ENCODE measurements at regions of chr5 and their contacts with region 1.

Region 1: GRCh38 chr5:134411546-134412266 is at the start of gene CDKN2AIPNL:
- DNase-seq: peak; percentile 97
- H3K4me3 ChIP-seq: peak within 1 kb of the TSS; percentile 65 to 99
- H3K27ac ChIP-seq: peak within 1 kb of the TSS; percentile 25 to 63; a peak in 3 of 4 replicates
- H3K4me1 ChIP-seq: peaks cover 0 to 14% of the 10 kb centered on the region in 2 experiments; a peak in 2 of 4 replicates
- H3K27me3 ChIP-seq: no peaks in the 10 kb centered on the region
- CTCF ChIP-seq: peak; percentile 70
- EP300 ChIP-seq: peak in 1 of 2 experiments; percentile 65; a peak in 1 of 4 replicates
- RAD21 ChIP-seq: peak; percentile 66
- polyA plus RNA-seq, gene CDKN2AIPNL: 23.3 and 29.4 TPM in 2 replicates

Region 2: GRCh38 chr5:134398609-134399155 is 13.0 kb before region 1 on chr5:
- CTCF ChIA-PET with region 1: interaction called, 16 read pairs
- POLR2A ChIA-PET with region 1: interaction called, 4 read pairs
- DNase-seq: no peak
- H3K4me3 ChIP-seq: no peak overlapping the region
- H3K27ac ChIP-seq: no peak overlapping the region
- H3K4me1 ChIP-seq: no peaks in the 10 kb centered on the region
- H3K27me3 ChIP-seq: no peaks in the 10 kb centered on the region
- CTCF ChIP-seq: no peak
- EP300 ChIP-seq: no peak
- RAD21 ChIP-seq: no peak

Region 3: GRCh38 chr5:134430001-134430569 is 18.4 kb after region 1 on chr5:
- CTCF ChIA-PET with region 1: interaction called, 14 read pairs
- POLR2A ChIA-PET with region 1: no interaction called
- DNase-seq: no peak
- H3K4me3 ChIP-seq: no peak overlapping the region
- H3K27ac ChIP-seq: no peak overlapping the region
- H3K4me1 ChIP-seq: peaks cover 2 to 4% of the 10 kb centered on the region in 2 experiments; a peak in 3 of 4 replicates
- H3K27me3 ChIP-seq: no peaks in the 10 kb centered on the region
- CTCF ChIP-seq: no peak
- EP300 ChIP-seq: no peak
- RAD21 ChIP-seq: no peak

Region 4: GRCh38 chr5:134465816-134466240 is 54.1 kb after region 1 on chr5:
- CTCF ChIA-PET with region 1: interaction called, 14 read pairs
- POLR2A ChIA-PET with region 1: interaction called, 7 read pairs
- DNase-seq: peak; percentile 95
- H3K4me3 ChIP-seq: peak overlapping the region; percentile 52 to 69
- H3K27ac ChIP-seq: peak overlapping the region; percentile 93 to 100
- H3K4me1 ChIP-seq: peaks cover 15 to 19% of the 10 kb centered on the region in 2 experiments; a peak in 2 of 4 replicates
- H3K27me3 ChIP-seq: no peaks in the 10 kb centered on the region
- CTCF ChIP-seq: no peak
- EP300 ChIP-seq: peak in 1 of 2 experiments; percentile 35; a peak in 1 of 4 replicates
- RAD21 ChIP-seq: peak; percentile 5; the same call in 1 of the 2 replicates

Region 5: DNA sequence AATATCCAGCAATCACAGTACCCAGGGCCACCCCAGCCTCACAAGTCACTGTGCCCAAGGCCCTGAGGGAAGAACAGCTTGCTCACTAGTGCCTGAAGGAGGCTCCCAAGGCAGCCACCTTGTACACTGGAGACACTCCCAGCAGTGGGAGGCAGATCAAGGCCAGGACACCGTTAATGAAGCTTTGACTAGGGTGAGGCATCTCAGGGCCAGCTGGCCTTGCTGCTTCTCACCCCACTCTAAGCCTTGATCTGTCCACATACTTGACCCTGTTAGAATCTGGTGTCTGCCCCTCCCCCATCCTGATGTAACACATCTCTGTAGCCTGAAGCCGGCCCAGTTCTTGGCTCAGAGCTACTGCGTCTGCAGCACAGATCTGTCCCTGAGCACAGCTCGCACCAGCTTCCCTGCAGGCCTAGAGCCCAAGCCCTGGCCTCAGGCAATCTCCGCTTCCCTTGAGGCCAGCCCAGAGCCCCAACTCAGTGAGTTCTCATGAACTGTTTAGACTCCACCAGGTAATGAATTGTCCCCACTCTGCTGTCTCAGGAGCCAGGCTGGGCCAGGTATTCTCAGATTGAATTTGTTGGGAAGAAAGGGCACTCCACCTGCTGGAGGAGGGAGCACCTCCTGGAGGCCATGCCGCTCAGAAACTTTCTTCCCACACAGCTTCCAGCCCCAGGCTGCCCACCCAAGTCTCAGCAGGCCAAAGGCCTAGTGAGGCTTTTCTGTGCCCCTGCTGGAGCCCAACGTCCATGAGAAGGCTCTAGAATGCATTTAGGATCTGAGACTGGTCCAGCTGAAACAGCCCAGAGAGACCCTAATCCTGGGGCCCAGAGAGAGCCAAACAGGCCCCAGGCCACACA is 100.3 kb after region 1 on chr5:
- CTCF ChIA-PET with region 1: interaction called, 12 read pairs
- POLR2A ChIA-PET with region 1: no interaction called
- DNase-seq: no peak
- H3K4me3 ChIP-seq: no peak overlapping the region
- H3K27ac ChIP-seq: peak overlapping the region; percentile 29 to 36
- H3K4me1 ChIP-seq: peaks cover 24 to 25% of the 10 kb centered on the region in 2 experiments; a peak in 3 of 4 replicates
- H3K27me3 ChIP-seq: no peaks in the 10 kb centered on the region
- CTCF ChIP-seq: no peak
- EP300 ChIP-seq: no peak
- RAD21 ChIP-seq: peak; percentile 22; the same call in 1 of the 2 replicates

Region 6: DNA sequence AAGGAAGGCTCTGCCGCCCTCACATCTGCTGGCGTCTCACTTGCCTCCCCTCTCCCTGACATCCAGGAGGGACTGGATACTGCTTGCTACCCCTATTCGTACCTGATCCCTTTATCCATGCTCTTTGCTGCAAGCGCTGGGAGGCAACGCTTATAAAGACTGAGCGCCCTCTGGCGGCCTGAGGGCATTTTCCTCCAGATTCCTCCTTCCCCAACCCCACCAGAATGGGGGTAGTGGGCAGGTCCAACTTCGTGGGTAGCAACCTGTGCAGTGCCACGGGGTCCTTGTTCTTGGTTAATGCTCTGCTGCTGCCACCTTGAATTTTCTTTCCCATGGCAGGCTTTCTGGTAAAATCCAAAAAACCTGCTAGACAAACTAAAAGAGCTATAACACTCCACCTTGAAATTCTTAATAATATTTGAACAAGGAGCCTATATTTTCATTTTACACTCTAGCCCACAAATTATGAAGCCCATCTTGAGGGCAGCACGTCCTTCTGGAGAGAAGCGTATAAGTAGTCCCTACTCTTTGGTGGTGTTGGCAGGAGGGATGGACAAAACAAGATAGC is 166.2 kb after region 1 on chr5:
- CTCF ChIA-PET with region 1: interaction called, 22 read pairs
- POLR2A ChIA-PET with region 1: interaction called, 5 read pairs
- DNase-seq: peak; percentile 90
- H3K4me3 ChIP-seq: no peak overlapping the region; a peak in 1 of 4 replicates
- H3K27ac ChIP-seq: peak overlapping the region in 1 of 2 experiments; percentile 51; a peak in 3 of 4 replicates
- H3K4me1 ChIP-seq: peaks cover 6 to 20% of the 10 kb centered on the region in 2 experiments; a peak in 2 of 4 replicates
- H3K27me3 ChIP-seq: no peaks in the 10 kb centered on the region
- CTCF ChIP-seq: peak; percentile 90
- EP300 ChIP-seq: no peak
- RAD21 ChIP-seq: peak; percentile 95